ENCODE measurements at regions of chr14 and their contacts with region 1.

Region 1: GRCh38 chr14:38867561-38868150 is 235.4 kb downstream of the SEC23A start:
- DNase-seq: peak; percentile 84
- H3K4me3 Mint-ChIP-seq: no peak overlapping the region
- H3K27ac Mint-ChIP-seq: no peak overlapping the region
- H3K4me1 Mint-ChIP-seq: no peaks in the 10 kb centered on the region
- H3K27me3 Mint-ChIP-seq: peaks cover 2% of the 10 kb centered on the region

Region 2: DNA sequence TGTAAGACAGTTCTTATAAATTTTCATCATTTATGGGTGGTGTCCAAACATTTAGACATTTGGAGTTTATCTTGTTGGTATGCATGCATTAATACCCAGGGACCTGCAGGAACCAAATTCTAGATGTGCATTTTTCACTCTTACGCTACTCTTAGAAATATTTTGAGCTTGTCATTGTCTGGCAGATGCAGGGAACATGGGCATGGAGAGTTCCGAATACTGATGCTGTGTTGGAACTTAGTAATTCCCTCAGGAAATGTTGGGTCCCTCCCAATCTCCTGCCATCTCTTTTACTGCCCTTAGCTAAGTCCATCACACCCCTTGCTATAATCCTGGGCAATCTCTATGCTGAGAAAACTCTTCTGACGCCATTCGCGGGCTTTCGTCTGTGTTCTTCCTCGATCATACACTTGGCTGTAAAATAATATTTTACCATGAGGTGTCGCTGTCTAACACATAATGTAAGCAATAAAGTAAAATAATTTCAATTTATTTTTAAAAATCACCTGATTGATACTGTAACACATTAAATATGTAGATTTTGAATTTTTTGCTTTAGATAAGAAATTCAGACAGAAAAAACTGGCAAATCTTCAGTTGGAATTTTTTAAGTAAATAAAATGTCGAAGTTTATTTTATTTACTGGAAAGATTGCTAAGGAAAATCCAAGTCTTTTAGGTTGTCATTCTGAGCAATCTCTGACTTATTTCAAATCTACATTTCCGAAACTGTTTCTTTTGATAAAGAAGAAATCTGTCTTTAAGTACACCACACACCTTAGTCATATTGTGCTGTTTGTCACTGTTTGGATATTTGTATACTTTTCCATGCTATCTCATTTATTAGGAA is 964.1 kb before region 1 on chr14:
- intact Hi-C with region 1: loop called (anchors 2 kb)
- DNase-seq: peak; percentile 62
- H3K4me3 Mint-ChIP-seq: no peak overlapping the region
- H3K27ac Mint-ChIP-seq: no peak overlapping the region
- H3K4me1 Mint-ChIP-seq: peaks cover 2% of the 10 kb centered on the region
- H3K27me3 Mint-ChIP-seq: peaks cover 2% of the 10 kb centered on the region